ENCODE measurements at regions of chr7 and their contacts with region 1.

Region 1: DNA sequence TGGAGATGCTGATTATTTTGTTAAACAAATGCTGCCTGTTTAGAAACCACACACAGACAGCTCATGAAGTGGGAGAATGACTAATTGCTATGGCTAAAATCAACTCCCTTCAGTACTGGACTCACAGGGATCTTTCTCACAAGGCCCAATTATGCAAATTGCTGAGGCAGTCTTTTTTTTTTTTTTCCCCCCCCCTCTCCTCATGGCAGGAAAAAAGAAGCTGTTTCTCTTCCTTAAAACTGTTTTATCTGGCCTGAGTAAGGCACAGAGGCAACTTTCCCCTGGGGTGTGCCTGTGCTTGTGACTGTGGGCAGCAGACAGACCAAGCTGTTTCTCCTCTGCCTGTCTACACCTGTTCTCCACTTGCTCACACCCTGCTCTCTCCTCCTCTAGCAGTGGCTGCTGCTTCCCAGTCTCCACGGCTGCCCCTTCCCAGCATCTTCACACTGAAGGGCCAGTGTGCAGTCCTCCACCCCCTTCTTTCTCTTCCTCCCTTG is 65.4 kb upstream of the STEAP1B start:
- DNase-seq: no peak
- ATAC-seq: peak; percentile 65
- H3K4me3 Mint-ChIP-seq: peak overlapping the region; percentile 39
- H3K27ac Mint-ChIP-seq: peak overlapping the region; percentile 88
- H3K4me1 Mint-ChIP-seq: peaks cover 86% of the 10 kb centered on the region
- H3K27me3 Mint-ChIP-seq: no peaks in the 10 kb centered on the region
- CTCF ChIP-seq: no peak

Region 2: DNA sequence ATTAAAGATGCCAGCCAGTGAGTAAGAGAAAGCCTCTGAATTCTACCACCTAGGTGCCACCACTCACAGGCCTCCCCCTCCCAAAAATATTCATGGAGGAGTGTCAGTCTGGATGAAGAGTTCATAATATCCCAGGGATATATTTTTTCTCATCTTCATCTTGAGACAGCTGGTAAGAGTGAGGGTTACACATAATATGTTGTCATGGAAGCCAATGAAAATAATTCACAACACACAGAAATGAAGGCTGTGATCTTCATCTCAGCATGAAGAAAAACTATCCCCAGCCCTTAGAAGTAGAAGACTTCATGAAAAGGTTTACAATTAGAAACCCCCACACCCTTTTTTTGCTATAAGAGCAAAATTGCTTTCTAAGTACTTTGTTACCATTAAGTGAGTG is 847.0 kb before region 1 on chr7:
- CTCF ChIA-PET with region 1: no interaction called
- POLR2A ChIA-PET with region 1: no interaction called
- intact Hi-C with region 1: no loop called
- DNase-seq: no peak
- ATAC-seq: no peak
- H3K4me3 Mint-ChIP-seq: no peak overlapping the region
- H3K27ac Mint-ChIP-seq: no peak overlapping the region
- H3K4me1 Mint-ChIP-seq: no peaks in the 10 kb centered on the region
- H3K27me3 Mint-ChIP-seq: peaks cover 16% of the 10 kb centered on the region
- CTCF ChIP-seq: no peak

Region 3: DNA sequence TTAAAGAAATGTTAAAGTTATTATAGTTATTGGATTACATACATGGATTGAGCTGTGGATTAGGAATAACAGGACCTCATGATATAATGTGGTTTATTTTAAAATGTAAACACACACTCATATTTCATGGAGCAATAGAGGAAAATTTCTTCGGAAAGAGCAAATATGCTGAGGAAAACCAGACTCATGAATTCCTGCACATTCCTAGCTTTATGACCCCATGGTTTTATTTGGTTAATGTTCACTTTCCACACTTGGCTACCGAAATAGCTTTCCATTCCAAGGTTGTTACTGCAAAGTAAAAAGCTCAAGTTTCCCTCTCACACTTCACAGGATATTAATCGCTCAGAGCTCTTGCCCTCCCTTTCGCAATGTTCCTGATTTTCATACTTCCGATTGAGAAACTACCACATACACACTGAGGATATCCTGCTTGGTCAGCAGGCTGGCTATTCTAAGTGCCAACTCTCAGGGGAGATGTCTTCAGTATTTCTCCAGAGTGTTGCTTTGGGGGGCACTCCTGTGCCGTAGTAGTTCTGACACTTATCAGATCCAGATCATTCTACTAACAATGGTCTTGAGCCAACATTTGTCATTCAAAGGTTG is 12.1 kb after region 1 on chr7:
- CTCF ChIA-PET with region 1: interaction called, 4 read pairs
- POLR2A ChIA-PET with region 1: interaction called, 9 read pairs
- intact Hi-C with region 1: loop called (anchors 1 kb)
- DNase-seq: no peak
- ATAC-seq: peak; percentile 28
- H3K4me3 Mint-ChIP-seq: peak overlapping the region; percentile 57
- H3K27ac Mint-ChIP-seq: peak overlapping the region; percentile 79
- H3K4me1 Mint-ChIP-seq: peaks cover 40% of the 10 kb centered on the region
- H3K27me3 Mint-ChIP-seq: no peaks in the 10 kb centered on the region
- CTCF ChIP-seq: no peak

Region 4: DNA sequence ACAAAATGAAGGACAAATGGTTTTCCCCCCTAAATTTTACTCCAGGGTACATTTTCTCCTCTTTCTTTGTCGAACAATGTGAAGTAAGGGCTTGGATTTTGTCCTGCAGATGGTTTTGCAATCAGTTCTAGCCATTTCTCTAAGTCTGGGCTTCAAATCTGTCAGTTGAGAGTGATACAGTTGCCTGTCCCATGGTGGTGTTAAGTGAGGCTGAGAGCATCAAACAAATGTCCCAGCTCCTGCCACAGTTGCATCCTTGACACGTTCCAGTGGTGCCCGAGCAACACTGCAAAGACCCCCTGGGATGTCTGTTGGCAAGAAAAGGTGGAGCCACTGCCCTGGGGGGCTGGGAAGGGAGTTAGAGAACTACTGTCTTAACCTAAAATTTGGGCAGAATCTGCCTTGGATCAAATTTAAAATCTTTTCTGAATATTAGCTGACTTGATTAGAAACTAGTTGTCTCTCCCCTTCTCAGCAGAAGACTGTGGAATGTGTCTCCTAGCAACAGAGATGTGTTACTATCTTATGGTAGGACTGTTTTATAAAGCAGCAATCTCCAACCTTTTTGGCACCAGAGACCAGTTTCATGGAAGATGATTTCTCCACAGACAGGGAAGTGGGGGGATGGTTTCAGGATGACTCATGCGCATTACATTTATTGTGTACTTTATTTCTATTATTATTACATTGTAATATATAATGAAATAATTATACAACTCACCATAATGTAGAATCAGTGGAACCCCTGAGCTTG is 36.6 kb after region 1 on chr7:
- CTCF ChIA-PET with region 1: no interaction called
- POLR2A ChIA-PET with region 1: no interaction called
- intact Hi-C with region 1: loop called (anchors 5 kb)
- DNase-seq: no peak
- ATAC-seq: no peak
- H3K4me3 Mint-ChIP-seq: no peak overlapping the region
- H3K27ac Mint-ChIP-seq: no peak overlapping the region
- H3K4me1 Mint-ChIP-seq: peaks cover 21% of the 10 kb centered on the region
- H3K27me3 Mint-ChIP-seq: no peaks in the 10 kb centered on the region
- CTCF ChIP-seq: no peak

Region 5: DNA sequence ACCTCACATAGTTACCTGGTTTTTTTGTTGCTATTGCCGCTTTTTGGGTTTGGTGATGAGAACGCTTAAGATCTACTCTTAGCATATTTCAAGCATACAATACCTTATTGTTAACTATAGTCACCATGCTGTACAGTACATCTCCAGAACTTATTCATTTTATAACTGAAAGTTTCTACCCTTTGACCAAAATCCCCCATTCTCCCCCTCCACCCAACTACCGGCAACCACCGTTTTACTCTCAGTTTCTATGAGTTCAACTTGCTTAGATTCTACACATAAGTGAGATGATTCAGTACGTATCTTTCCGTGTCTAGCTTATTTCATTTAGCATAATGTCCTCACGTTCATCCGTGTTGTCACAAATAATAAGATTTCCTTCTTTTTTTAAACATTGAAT is 74.9 kb after region 1 on chr7:
- CTCF ChIA-PET with region 1: interaction called, 4 read pairs
- POLR2A ChIA-PET with region 1: interaction called, 17 read pairs
- intact Hi-C with region 1: loop called (anchors 1 kb)
- DNase-seq: no peak
- ATAC-seq: peak; percentile 91
- H3K4me3 Mint-ChIP-seq: peak overlapping the region; percentile 55
- H3K27ac Mint-ChIP-seq: peak overlapping the region; percentile 75
- H3K4me1 Mint-ChIP-seq: peaks cover 30% of the 10 kb centered on the region
- H3K27me3 Mint-ChIP-seq: no peaks in the 10 kb centered on the region
- CTCF ChIP-seq: no peak

Region 6: DNA sequence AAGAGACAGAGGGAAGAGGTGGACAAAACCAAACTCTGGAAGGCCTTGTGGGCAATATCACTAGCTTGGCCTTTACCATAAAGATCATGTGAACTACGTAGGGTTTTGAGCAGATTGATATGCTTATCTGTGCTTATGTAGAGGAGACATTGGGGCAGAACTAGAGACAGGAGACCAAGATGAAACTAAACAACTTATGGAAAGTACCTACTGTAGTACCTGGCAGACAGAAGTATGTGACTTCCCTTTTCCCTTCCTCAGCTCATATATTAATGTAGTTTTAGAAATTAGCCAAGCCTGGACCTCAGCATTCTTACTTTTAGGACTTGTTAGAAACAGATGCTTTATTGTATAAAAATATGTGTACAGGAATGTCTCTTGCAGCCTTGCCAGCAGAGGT is 147.6 kb after region 1 on chr7:
- CTCF ChIA-PET with region 1: interaction called, 4 read pairs
- POLR2A ChIA-PET with region 1: interaction called, 11 read pairs
- intact Hi-C with region 1: no loop called
- DNase-seq: no peak
- ATAC-seq: peak; percentile 85
- H3K4me3 Mint-ChIP-seq: peak overlapping the region; percentile 66
- H3K27ac Mint-ChIP-seq: peak overlapping the region; percentile 98
- H3K4me1 Mint-ChIP-seq: peaks cover 63% of the 10 kb centered on the region
- H3K27me3 Mint-ChIP-seq: no peaks in the 10 kb centered on the region
- CTCF ChIP-seq: no peak

Region 7: DNA sequence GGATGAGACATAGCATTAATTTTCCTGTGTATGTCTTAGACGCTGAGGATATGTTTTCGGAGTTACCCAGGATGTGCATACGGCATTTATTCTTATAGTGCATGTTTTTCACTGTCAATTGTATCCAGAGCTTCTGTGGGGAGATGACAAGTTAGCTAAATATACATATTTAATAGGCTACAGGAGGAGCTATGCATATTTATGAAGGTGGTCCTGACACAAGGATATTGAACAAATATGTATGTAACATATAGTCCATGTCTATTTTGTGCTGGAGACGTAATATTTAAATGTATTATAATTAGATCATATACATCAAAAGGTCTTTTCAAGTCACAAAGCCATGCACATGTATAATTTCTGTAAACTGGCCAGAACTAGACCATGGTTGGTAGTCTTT is 177.7 kb after region 1 on chr7:
- CTCF ChIA-PET with region 1: no interaction called
- POLR2A ChIA-PET with region 1: no interaction called
- intact Hi-C with region 1: no loop called
- DNase-seq: no peak
- ATAC-seq: no peak
- H3K4me3 Mint-ChIP-seq: no peak overlapping the region
- H3K27ac Mint-ChIP-seq: no peak overlapping the region
- H3K4me1 Mint-ChIP-seq: peaks cover 2% of the 10 kb centered on the region
- H3K27me3 Mint-ChIP-seq: no peaks in the 10 kb centered on the region
- CTCF ChIP-seq: no peak

Measured in activated B cell treated with CpG ODN at 0.5 μM for 24 hours (primary cell).